Mammary epithelial cell (primary cell): ENCODE measurements at regions of chr13 and their contacts with region 1.

Region 1: GRCh38 chr13:91668866-91669495 is 270.6 kb downstream of the GPC5 start:
- DNase-seq: no peak
- H3K4me3 ChIP-seq: no peak overlapping the region
- H3K27ac ChIP-seq: no peak overlapping the region
- H3K4me1 ChIP-seq: no peaks in the 10 kb centered on the region
- H3K27me3 ChIP-seq: no peaks in the 10 kb centered on the region
- CTCF ChIP-seq: no peak

Region 2: DNA sequence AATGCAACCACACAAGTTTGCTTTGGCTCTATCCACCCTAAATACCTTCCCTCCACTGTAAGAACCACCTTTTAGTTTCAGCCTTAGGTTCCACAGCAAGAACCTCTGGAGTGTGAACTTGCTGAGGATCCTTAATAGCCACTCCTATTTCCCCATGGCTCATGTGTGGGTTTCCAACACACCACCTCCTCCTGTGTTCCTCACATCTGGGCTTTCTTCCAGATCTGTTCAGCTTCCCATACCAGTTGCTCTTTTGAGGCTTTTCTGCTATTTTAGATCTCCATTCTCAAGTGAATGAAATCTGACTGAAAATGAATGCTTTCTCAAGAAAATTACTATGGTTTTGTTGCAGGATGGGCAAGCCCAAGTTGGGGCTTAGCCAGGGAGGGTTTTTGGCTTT is 426.3 kb before region 1 on chr13:
- CTCF ChIA-PET with region 1: no interaction called
- dilution Hi-C with region 1: no loop called
- in situ Hi-C with region 1: no loop called
- intact Hi-C with region 1: loop called (anchors 5 kb)
- DNase-seq: no peak
- H3K4me3 ChIP-seq: no peak overlapping the region
- H3K27ac ChIP-seq: no peak overlapping the region
- H3K4me1 ChIP-seq: no peaks in the 10 kb centered on the region
- H3K27me3 ChIP-seq: no peaks in the 10 kb centered on the region
- CTCF ChIP-seq: no peak